Activated naive CD4-positive, alpha-beta T cell treated with anti-CD3 and anti-CD28 coated beads for 36 hours (primary cell): ENCODE measurements at regions of chr10 and their contacts with region 1.

Region 1: GRCh38 chr10:96017191-96017687 is 26.1 kb upstream of the CCNJ start:
- DNase-seq: peak; percentile 53
- H3K4me3 Mint-ChIP-seq: no peak overlapping the region
- H3K27ac Mint-ChIP-seq: no peak overlapping the region
- H3K4me1 Mint-ChIP-seq: no peaks in the 10 kb centered on the region
- H3K27me3 Mint-ChIP-seq: no peaks in the 10 kb centered on the region

Region 2: GRCh38 chr10:96292971-96293920 is 276.0 kb after region 1 on chr10:
- CTCF ChIA-PET with region 1: interaction called, 19 read pairs
- intact Hi-C with region 1: loop called (anchors 1 kb)
- DNase-seq: peak; percentile 31
- H3K4me3 Mint-ChIP-seq: no peak overlapping the region
- H3K27ac Mint-ChIP-seq: no peak overlapping the region
- H3K4me1 Mint-ChIP-seq: peaks cover 17% of the 10 kb centered on the region
- H3K27me3 Mint-ChIP-seq: no peaks in the 10 kb centered on the region